ENCODE measurements at regions of chr9 and their contacts with region 1.

Region 1: GRCh38 chr9:137223078-137223970 is 1.3 kb upstream of the RNF208 start:
- DNase-seq: peak; percentile 98
- H3K4me3 Mint-ChIP-seq: peak overlapping the region; percentile 83
- H3K27ac Mint-ChIP-seq: peak overlapping the region; percentile 61
- H3K4me1 Mint-ChIP-seq: peaks cover 15% of the 10 kb centered on the region
- H3K27me3 Mint-ChIP-seq: no peaks in the 10 kb centered on the region
- CTCF ChIP-seq: no peak

Region 2: DNA sequence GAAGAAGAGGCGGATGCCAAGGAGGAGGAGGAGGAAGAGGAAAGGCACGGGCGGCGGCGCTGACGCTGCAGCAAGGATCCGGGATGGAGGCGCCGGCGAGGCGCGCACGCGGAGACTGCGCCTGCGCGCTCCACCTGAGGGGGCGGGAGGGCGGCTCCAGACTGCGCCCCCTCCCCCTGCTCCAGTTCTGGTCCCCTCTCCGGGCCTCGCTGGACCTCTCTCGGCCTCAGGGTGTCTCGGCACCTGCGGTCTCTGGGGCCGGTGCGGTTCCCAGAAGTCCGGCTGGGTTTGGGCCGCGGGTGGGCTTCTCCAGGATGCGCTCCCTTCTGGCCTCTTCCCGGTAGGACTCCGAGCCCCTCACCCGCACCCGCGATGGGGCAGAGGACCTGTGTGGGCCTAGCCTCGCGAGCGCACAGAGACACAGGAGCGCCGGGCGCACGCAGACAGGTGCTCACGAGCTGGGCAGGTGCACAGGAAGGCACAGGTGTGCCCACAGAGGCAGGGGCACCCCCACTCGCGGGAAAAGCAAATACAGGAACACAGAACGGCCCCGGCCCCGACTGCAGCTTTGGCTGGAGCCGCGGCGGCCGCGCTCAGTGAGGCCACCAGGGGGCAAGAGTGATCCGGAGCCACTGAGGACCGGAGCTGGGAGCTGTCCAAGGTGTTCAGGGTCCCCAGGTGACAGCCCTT is 177.1 kb before region 1 on chr9 and contains the start of gene NPDC1:
- CTCF ChIA-PET with region 1: interaction called, 10 read pairs
- POLR2A ChIA-PET with region 1: interaction called, 3 read pairs
- intact Hi-C with region 1: loop called (anchors 10 kb)
- DNase-seq: peak; percentile 82
- H3K4me3 Mint-ChIP-seq: peak within 1 kb of the TSS; percentile 74
- H3K27ac Mint-ChIP-seq: no peak within 1 kb of the TSS
- H3K4me1 Mint-ChIP-seq: no peaks in the 10 kb centered on the region
- H3K27me3 Mint-ChIP-seq: no peaks in the 10 kb centered on the region
- CTCF ChIP-seq: peak; percentile 87
- total RNA-seq, gene NPDC1: 161 and 171 TPM in 2 replicates

Region 3: GRCh38 chr9:137114610-137115391 is 108.5 kb before region 1 on chr9 and contains the start of gene DPP7:
- CTCF ChIA-PET with region 1: interaction called, 15 read pairs
- POLR2A ChIA-PET with region 1: interaction called, 8 read pairs
- intact Hi-C with region 1: loop called (anchors 1 kb)
- DNase-seq: peak; percentile 53
- H3K4me3 Mint-ChIP-seq: peak within 1 kb of the TSS; percentile 62
- H3K27ac Mint-ChIP-seq: no peak within 1 kb of the TSS
- H3K4me1 Mint-ChIP-seq: no peaks in the 10 kb centered on the region
- H3K27me3 Mint-ChIP-seq: no peaks in the 10 kb centered on the region
- CTCF ChIP-seq: no peak
- total RNA-seq, gene DPP7: 139 and 157 TPM in 2 replicates

Region 4: DNA sequence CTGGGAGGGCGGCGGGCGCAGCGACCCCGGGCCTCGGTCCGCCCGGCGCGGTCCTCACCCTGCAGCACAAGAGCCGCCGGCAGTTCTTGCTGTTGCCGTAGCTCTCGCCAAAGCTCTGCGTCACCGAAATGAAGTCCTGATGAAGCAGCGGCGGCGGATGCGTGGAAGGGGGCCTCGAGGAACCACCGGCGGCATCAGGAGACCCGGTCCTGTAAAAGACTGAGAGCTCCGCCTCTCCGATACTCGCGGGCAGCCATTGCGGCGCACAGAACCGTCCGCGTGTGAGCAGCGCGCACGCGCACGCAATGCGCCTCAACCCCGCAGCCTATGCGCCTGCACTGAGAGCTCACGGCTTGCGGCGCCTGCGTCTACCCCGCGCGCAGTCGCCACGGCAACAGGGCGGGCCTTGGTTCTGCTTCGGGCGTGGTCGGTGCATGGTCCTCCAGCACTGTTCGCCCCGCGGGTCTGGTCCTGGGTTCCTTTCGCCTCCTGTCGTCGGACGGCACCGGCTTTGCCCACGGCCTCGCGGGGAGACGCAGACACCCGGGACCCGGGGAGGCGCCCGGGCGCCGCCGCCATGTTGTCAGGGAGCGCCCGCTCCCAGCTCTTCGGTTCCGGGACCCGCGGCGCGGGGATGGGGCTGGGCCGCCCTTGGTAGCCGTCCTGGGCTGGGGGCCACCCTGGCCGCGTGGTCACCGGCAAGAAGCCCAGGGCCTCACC is 93.7 kb before region 1 on chr9:
- CTCF ChIA-PET with region 1: interaction called, 12 read pairs
- POLR2A ChIA-PET with region 1: interaction called, 14 read pairs
- intact Hi-C with region 1: no loop called
- DNase-seq: peak; percentile 91
- H3K4me3 Mint-ChIP-seq: peak overlapping the region; percentile 77
- H3K27ac Mint-ChIP-seq: no peak overlapping the region
- H3K4me1 Mint-ChIP-seq: peaks cover 18% of the 10 kb centered on the region
- H3K27me3 Mint-ChIP-seq: no peaks in the 10 kb centered on the region
- CTCF ChIP-seq: no peak

Region 5: GRCh38 chr9:137176302-137177182 is 46.8 kb before region 1 on chr9:
- CTCF ChIA-PET with region 1: no interaction called
- POLR2A ChIA-PET with region 1: no interaction called
- intact Hi-C with region 1: loop called (anchors 10 kb)
- DNase-seq: peak; percentile 52
- H3K4me3 Mint-ChIP-seq: no peak overlapping the region
- H3K27ac Mint-ChIP-seq: peak overlapping the region; percentile 24
- H3K4me1 Mint-ChIP-seq: no peaks in the 10 kb centered on the region
- H3K27me3 Mint-ChIP-seq: no peaks in the 10 kb centered on the region
- CTCF ChIP-seq: peak; percentile 71

Region 6: GRCh38 chr9:137188490-137189296 is 34.6 kb before region 1 on chr9 and contains the starts of genes ANAPC2 and SSNA1:
- CTCF ChIA-PET with region 1: interaction called, 11 read pairs
- POLR2A ChIA-PET with region 1: interaction called, 57 read pairs
- intact Hi-C with region 1: loop called (anchors 1 kb)
- DNase-seq: peak; percentile 91
- H3K4me3 Mint-ChIP-seq: peak within 1 kb of the TSS; percentile 94
- H3K27ac Mint-ChIP-seq: peak within 1 kb of the TSS; percentile 95
- H3K4me1 Mint-ChIP-seq: peaks cover 10% of the 10 kb centered on the region
- H3K27me3 Mint-ChIP-seq: no peaks in the 10 kb centered on the region
- CTCF ChIP-seq: peak; percentile 25
- total RNA-seq, gene ANAPC2: 42.1 and 43.6 TPM in 2 replicates
- total RNA-seq, gene SSNA1: 81.4 and 82.6 TPM in 2 replicates

Region 7: GRCh38 chr9:137200311-137201204 is 22.8 kb before region 1 on chr9 and contains the start of gene TPRN:
- CTCF ChIA-PET with region 1: interaction called, 3 read pairs
- POLR2A ChIA-PET with region 1: interaction called, 73 read pairs
- intact Hi-C with region 1: no loop called
- DNase-seq: peak; percentile 100
- H3K4me3 Mint-ChIP-seq: peak within 1 kb of the TSS; percentile 76
- H3K27ac Mint-ChIP-seq: no peak within 1 kb of the TSS
- H3K4me1 Mint-ChIP-seq: peaks cover 12% of the 10 kb centered on the region
- H3K27me3 Mint-ChIP-seq: no peaks in the 10 kb centered on the region
- CTCF ChIP-seq: no peak
- total RNA-seq, gene TPRN: 12.6 and 13.4 TPM in 2 replicates

Region 8: GRCh38 chr9:137286975-137287383 is 63.7 kb after region 1 on chr9:
- CTCF ChIA-PET with region 1: no interaction called
- POLR2A ChIA-PET with region 1: no interaction called
- intact Hi-C with region 1: no loop called
- DNase-seq: peak; percentile 77
- H3K4me3 Mint-ChIP-seq: no peak overlapping the region
- H3K27ac Mint-ChIP-seq: no peak overlapping the region
- H3K4me1 Mint-ChIP-seq: no peaks in the 10 kb centered on the region
- H3K27me3 Mint-ChIP-seq: no peaks in the 10 kb centered on the region
- CTCF ChIP-seq: peak; percentile 48

Region 9: GRCh38 chr9:137757613-137758029 is 534.3 kb after region 1 on chr9:
- CTCF ChIA-PET with region 1: no interaction called
- POLR2A ChIA-PET with region 1: no interaction called
- intact Hi-C with region 1: no loop called
- DNase-seq: peak; percentile 1
- H3K4me3 Mint-ChIP-seq: no peak overlapping the region
- H3K27ac Mint-ChIP-seq: no peak overlapping the region
- H3K4me1 Mint-ChIP-seq: peaks cover 6% of the 10 kb centered on the region
- H3K27me3 Mint-ChIP-seq: no peaks in the 10 kb centered on the region
- CTCF ChIP-seq: no peak

Measured in MCF 10A (cell line).